ENCODE measurements at regions of chr7 and their contacts with region 1.

Region 1: DNA sequence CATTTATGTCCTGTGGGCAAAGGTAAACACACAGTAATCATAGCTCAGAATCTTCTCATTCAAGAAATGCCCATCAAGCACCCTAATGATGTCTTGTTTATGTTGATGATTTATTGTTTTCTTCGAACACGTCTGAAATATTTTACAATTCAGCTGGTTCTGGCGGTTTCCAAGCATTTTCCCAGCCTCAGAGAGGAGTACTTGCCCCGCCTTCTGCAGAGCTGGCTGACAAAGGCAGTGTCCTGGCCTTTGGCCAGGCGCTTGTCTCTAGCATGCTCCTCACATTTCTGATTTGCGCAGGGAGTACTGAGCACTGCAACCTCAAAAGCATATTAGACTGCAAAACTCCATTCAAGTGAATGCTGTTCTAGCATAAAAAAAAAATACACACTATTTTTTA is 314.2 kb upstream of the GNAI1 start:
- DNase-seq: no peak
- H3K4me3 Mint-ChIP-seq: no peak overlapping the region
- H3K27ac Mint-ChIP-seq: no peak overlapping the region
- H3K4me1 Mint-ChIP-seq: no peaks in the 10 kb centered on the region
- H3K27me3 Mint-ChIP-seq: no peaks in the 10 kb centered on the region

Region 2: GRCh38 chr7:79806161-79806734 is 14.1 kb before region 1 on chr7:
- intact Hi-C with region 1: no loop called
- DNase-seq: no peak
- H3K4me3 Mint-ChIP-seq: no peak overlapping the region
- H3K27ac Mint-ChIP-seq: no peak overlapping the region
- H3K4me1 Mint-ChIP-seq: no peaks in the 10 kb centered on the region
- H3K27me3 Mint-ChIP-seq: no peaks in the 10 kb centered on the region

Region 3: GRCh38 chr7:80018941-80019752 is 198.8 kb after region 1 on chr7:
- intact Hi-C with region 1: loop called (anchors 10 kb)
- DNase-seq: peak; percentile 10
- H3K4me3 Mint-ChIP-seq: no peak overlapping the region
- H3K27ac Mint-ChIP-seq: no peak overlapping the region
- H3K4me1 Mint-ChIP-seq: no peaks in the 10 kb centered on the region
- H3K27me3 Mint-ChIP-seq: no peaks in the 10 kb centered on the region

Measured in activated T-helper 1 cell treated with anti-CD3 and anti-CD28 coated beads, Interleukin-12 subunit alpha, Interleukin-12 subunit beta, Interleukin-2, Interleukin-4 antibody, amounts not matched to agents 30 ng/mL and 10 ng/mL and 1 ng/mL, durations not matched to agents 14 hours and 24 hours and 36 hours (primary cell).